Activated CD8-positive, alpha-beta T cell treated with anti-CD3 and anti-CD28 coated beads for 36 hours (primary cell): ENCODE measurements at regions of chr15 and their contacts with region 1.

Region 1: DNA sequence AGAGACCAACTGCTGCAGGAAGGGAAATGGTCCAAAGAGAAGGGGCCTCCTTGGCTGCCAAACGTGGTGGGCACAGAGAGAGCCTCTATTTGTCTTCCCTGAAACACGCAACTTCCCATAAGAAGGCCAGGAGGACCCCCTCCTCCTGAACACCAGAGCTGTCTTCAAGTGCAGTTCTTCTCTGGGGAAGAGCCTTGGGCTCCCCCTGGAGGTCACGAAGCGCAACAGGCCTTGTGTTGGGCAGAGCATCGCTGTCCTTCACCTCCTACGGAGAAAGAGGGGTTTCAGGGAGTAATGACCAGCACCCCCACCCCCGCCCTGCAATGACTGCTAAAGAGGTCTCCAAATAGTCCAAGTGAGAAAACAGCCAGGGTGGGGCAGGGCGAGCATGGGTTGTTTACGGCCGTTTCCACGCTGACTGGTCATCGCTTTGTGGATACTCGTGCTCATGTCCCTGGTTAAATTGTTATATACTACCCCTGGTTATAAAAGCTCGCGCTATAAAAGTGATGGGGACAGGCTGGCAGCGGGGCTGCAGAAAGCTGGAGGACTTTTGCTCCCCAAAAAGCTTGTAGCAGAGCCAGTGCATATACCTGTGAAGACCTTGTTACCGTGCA is 397.5 kb upstream of the ATP10A start:
- DNase-seq: peak; percentile 23
- ATAC-seq: no peak
- H3K4me3 Mint-ChIP-seq: no peak overlapping the region
- H3K27ac Mint-ChIP-seq: no peak overlapping the region
- H3K4me1 Mint-ChIP-seq: no peaks in the 10 kb centered on the region
- H3K27me3 Mint-ChIP-seq: peaks cover 7% of the 10 kb centered on the region
- CTCF ChIP-seq: peak; percentile 76

Region 2: GRCh38 chr15:25508369-25509002 is 752.1 kb before region 1 on chr15:
- CTCF ChIA-PET with region 1: interaction called, 8 read pairs
- POLR2A ChIA-PET with region 1: no interaction called
- intact Hi-C with region 1: loop called (anchors 10 kb)
- DNase-seq: peak; percentile 3
- ATAC-seq: no peak
- H3K4me3 Mint-ChIP-seq: no peak overlapping the region
- H3K27ac Mint-ChIP-seq: no peak overlapping the region
- H3K4me1 Mint-ChIP-seq: no peaks in the 10 kb centered on the region
- H3K27me3 Mint-ChIP-seq: peaks cover 3% of the 10 kb centered on the region
- CTCF ChIP-seq: peak; percentile 68

Region 3: GRCh38 chr15:26352909-26353308 is 92.3 kb after region 1 on chr15:
- CTCF ChIA-PET with region 1: no interaction called
- POLR2A ChIA-PET with region 1: no interaction called
- intact Hi-C with region 1: no loop called
- DNase-seq: no peak
- ATAC-seq: no peak
- H3K4me3 Mint-ChIP-seq: no peak overlapping the region
- H3K27ac Mint-ChIP-seq: no peak overlapping the region
- H3K4me1 Mint-ChIP-seq: no peaks in the 10 kb centered on the region
- H3K27me3 Mint-ChIP-seq: no peaks in the 10 kb centered on the region
- CTCF ChIP-seq: no peak

Region 4: DNA sequence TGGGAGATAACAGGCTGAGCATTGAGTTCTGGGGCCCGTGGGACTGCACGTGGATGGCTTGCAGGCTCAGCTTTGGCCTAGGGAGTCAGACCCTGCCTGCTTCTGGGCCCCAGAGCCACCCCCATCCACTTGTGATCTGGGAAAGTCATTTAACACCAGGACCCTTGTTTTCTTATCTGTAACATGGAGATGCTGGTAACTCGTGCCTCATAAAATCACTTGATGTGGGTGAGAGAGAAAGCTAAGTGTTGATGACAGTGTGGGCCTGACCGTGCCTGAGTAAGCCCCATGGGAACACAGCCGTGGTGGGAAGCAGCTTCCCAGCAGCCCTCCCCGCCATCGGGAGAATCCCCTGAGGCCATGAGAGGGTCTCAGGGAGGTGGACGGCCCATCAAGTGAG is 134.2 kb after region 1 on chr15:
- CTCF ChIA-PET with region 1: no interaction called
- POLR2A ChIA-PET with region 1: no interaction called
- intact Hi-C with region 1: no loop called
- DNase-seq: no peak
- ATAC-seq: no peak
- H3K4me3 Mint-ChIP-seq: no peak overlapping the region
- H3K27ac Mint-ChIP-seq: no peak overlapping the region
- H3K4me1 Mint-ChIP-seq: no peaks in the 10 kb centered on the region
- H3K27me3 Mint-ChIP-seq: no peaks in the 10 kb centered on the region
- CTCF ChIP-seq: no peak